Ascending aorta (tissue), 2 donors: ENCODE measurements at regions of chr7 and their contacts with region 1.

Region 1: DNA sequence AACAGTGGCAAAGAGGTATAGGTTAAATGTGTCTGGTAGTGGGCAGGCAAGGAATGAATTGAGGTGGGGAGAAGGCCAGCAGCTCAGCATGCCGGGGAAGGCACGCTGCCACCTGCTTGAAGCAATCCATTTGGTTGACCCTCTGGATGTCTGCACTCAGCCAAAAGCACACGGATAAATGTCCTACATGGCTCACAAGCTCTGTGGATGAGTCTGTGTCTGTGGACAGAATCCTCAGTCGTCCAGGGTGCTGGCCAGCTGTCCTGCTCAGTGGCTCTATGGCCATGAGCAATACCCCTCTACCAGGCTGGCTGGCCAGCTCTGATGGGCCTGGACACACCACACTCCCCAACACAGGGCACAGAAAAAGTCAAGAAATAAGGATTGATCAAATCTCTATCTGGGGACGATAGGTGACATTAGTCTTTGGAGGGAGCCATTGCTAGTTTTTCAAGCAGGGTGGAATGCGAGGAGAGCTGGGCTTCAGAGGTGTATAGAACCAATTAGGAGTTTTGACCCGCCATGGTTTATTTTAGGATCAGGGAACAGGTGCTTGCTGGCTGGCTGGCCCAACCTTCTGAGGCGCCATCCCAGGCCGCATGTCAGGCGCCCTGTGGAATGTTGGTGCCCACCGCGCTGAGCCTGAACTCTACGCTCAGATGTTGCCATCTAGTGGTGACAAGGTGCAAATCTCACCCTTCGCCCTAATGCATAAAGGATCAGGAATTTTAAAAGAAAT is 493.4 kb downstream of the TNS3 start:
- DNase-seq: peak in 1 of 2 donors; percentile 74
- H3K4me3 ChIP-seq: no peak overlapping the region
- H3K27ac ChIP-seq: no peak overlapping the region
- H3K4me1 ChIP-seq: peaks cover 0 to 8% of the 10 kb centered on the region in 2 donors
- H3K27me3 ChIP-seq: no peaks in the 10 kb centered on the region
- CTCF ChIP-seq: peak; percentile 79 to 89 (median 82)

Region 2: GRCh38 chr7:46352004-46352954 is 736.2 kb before region 1 on chr7:
- intact Hi-C with region 1: loop called (anchors 5 kb)
- DNase-seq: no peak
- H3K4me3 ChIP-seq: no peak overlapping the region
- H3K27ac ChIP-seq: no peak overlapping the region
- H3K4me1 ChIP-seq: no peaks in the 10 kb centered on the region
- H3K27me3 ChIP-seq: no peaks in the 10 kb centered on the region
- CTCF ChIP-seq: peak; percentile 55 to 71 (median 55)

Region 3: DNA sequence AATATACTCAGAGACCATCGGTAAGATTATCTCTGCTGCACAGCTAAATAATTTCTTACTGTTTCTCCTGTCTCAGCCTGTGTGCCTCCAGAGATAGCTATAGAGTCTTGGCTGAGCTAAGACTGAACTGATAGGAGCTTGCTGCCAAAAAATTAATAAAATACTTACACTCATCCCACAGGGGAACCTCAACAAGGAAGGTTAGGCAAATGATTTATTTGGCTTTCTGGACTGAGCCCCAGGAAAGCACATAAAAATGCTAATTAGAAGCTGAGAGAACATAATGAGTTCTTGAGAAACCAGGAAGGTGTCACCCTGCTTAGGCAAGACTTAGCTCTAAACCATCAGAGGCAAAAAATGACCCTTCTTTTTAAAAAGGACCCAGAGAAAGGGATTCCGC is 41.1 kb before region 1 on chr7:
- intact Hi-C with region 1: no loop called
- DNase-seq: no peak
- H3K4me3 ChIP-seq: no peak overlapping the region
- H3K27ac ChIP-seq: no peak overlapping the region
- H3K4me1 ChIP-seq: peaks cover 0 to 15% of the 10 kb centered on the region in 2 donors
- H3K27me3 ChIP-seq: no peaks in the 10 kb centered on the region
- CTCF ChIP-seq: no peak

Region 4: GRCh38 chr7:47143339-47143738 is 54.8 kb after region 1 on chr7:
- intact Hi-C with region 1: no loop called
- DNase-seq: no peak
- H3K4me3 ChIP-seq: no peak overlapping the region
- H3K27ac ChIP-seq: no peak overlapping the region
- H3K4me1 ChIP-seq: no peaks in the 10 kb centered on the region
- H3K27me3 ChIP-seq: no peaks in the 10 kb centered on the region
- CTCF ChIP-seq: no peak